Heart right ventricle (tissue), 16 donors: ENCODE measurements at regions of chr15 and their contacts with region 1.

Region 1: DNA sequence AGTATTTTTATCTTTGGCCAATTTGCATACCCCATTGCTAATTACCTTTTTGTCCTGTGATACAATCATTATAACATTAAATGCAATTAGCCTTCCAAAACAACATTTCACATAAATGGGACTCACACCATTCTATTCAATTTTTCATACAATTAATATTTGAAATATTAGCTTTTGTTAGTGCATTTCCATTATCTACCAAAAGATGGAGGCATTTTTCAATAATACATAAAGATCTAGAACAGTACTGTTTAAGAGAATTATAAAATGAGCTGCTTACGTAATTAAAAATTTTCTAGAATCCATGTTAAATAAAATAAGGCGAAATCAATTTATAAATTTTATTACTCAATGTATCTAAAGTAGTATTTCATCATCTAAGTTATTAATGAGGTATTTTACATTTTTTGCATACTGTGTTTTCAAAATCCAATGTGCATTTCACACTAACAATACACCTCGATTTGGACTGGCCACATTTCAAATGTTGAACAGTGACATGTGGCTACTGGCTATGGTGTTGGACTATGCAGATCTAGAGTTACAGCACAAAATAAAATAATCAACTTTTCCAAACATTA is 74.3 kb downstream of the TJP1 start:
- DNase-seq: no peak
- ATAC-seq: no peak
- H3K4me3 ChIP-seq: no peak overlapping the region
- H3K27ac ChIP-seq: no peak overlapping the region
- H3K4me1 ChIP-seq: peaks cover 0 to 33% (median 12%) of the 10 kb centered on the region in 9 donors
- H3K27me3 ChIP-seq: no peaks in the 10 kb centered on the region
- CTCF ChIP-seq: peak; percentile 19 to 72 (median 49)

Region 2: DNA sequence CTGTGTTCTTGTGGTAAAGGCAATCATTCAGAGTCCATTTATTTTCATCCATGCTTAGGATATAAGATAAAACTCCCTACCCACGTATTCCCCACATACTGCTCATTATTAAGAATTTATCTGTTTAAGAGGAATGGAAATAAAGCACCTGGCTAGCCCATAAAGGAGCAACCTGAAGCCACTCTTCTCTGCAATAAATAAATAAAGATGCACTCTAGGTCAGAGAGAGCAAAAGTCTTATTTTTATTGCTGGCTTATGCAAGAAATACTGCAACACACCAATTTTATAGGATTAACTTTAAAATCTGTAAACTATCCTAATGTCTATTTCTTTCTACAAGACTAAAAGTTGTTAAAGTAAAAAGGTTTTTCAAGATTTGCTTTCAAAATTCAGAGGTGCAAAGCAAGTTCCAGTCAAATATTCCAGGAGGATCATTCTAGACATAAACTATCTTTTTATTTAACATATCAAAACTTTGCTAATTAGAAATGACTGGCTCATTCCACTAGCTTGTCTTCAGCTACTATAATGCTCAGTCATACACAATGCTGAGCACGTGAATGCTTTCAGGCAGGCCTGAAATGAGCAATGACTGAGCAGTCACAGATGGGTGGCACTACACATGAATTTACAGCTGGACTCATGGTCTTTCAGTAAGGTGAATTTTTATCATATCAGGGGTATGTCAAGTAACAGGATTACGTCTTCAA is 67.2 kb after region 1 on chr15:
- intact Hi-C with region 1: loop called in 2 of 10 experiments (anchors 5 kb)
- DNase-seq: no peak
- ATAC-seq: peak in 7 of 8 donors; percentile 56 to 87 (median 75)
- H3K4me3 ChIP-seq: no peak overlapping the region
- H3K27ac ChIP-seq: peak overlapping the region in 2 of 10 donors; percentile 9 to 49
- H3K4me1 ChIP-seq: peaks cover 16 to 95% (median 70%) of the 10 kb centered on the region in 9 donors
- H3K27me3 ChIP-seq: peaks cover 0 to 38% (median 0%) of the 10 kb centered on the region in 7 donors
- CTCF ChIP-seq: no peak

Region 3: DNA sequence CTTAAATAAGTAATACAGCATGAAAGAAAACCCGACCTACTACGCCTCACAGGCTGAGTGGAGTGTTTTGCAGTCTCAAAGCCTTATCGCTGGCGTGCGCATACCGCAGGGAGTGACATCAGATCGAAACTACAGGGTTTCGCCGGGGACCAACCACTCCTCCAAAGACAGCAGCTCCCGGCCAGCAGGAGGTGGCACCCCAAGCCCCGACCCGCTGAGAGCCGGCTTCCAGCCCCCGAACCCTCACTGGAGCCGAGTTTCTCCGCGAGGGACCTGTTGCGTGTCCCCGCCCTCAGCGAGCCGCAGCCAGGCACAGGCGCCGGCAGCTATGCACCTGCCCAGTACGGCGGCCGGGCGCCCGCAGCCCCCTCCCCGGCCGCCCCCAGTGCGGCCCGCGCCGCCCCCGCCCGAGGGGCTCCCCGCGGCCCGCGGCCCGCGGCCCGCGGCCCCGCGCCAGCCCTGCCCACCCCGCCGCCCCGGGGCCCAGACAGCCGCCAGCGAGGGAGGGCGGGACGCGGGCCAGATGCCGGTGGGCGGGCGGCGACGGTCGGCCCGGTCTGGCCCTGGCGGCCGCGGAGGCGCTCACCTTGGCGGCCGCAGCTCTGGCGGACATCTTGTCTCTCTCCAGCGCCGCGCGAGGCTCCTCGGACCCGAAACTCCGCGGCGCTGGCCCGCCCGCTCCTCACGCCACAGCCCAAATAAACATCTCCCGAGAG is 73.6 kb after region 1 on chr15:
- intact Hi-C with region 1: loop called in 2 of 10 experiments (anchors 5 kb)
- DNase-seq: peak; percentile 69 to 83
- ATAC-seq: peak; percentile 39 to 86 (median 72)
- H3K4me3 ChIP-seq: peak overlapping the region; percentile 56 to 91 (median 76)
- H3K27ac ChIP-seq: peak overlapping the region; percentile 92 to 99 (median 98)
- H3K4me1 ChIP-seq: peaks cover 4 to 63% (median 28%) of the 10 kb centered on the region in 9 donors
- H3K27me3 ChIP-seq: peaks cover 0 to 73% (median 0%) of the 10 kb centered on the region in 7 donors
- CTCF ChIP-seq: peak in 8 of 9 donors; percentile 9 to 54 (median 28)

Region 4: GRCh38 chr15:29870495-29871151 is 122.7 kb after region 1 on chr15:
- intact Hi-C with region 1: loop called in 1 of 10 experiments (anchors 5 kb)
- DNase-seq: peak; percentile 44 to 61
- ATAC-seq: peak; percentile 64 to 86 (median 80)
- H3K4me3 ChIP-seq: peak overlapping the region in 3 of 10 donors; percentile 23 to 32 (median 26)
- H3K27ac ChIP-seq: peak overlapping the region; percentile 55 to 91 (median 76)
- H3K4me1 ChIP-seq: peaks cover 6 to 67% (median 30%) of the 10 kb centered on the region in 9 donors
- H3K27me3 ChIP-seq: no peaks in the 10 kb centered on the region
- CTCF ChIP-seq: no peak

Region 5: GRCh38 chr15:29913528-29914135 is 165.7 kb after region 1 on chr15:
- intact Hi-C with region 1: loop called in 2 of 10 experiments (anchors 5 kb)
- DNase-seq: no peak
- ATAC-seq: peak; percentile 36 to 76 (median 68)
- H3K4me3 ChIP-seq: no peak overlapping the region
- H3K27ac ChIP-seq: peak overlapping the region; percentile 4 to 86 (median 68)
- H3K4me1 ChIP-seq: peaks cover 5 to 62% (median 34%) of the 10 kb centered on the region in 9 donors
- H3K27me3 ChIP-seq: no peaks in the 10 kb centered on the region
- CTCF ChIP-seq: no peak

Region 6: DNA sequence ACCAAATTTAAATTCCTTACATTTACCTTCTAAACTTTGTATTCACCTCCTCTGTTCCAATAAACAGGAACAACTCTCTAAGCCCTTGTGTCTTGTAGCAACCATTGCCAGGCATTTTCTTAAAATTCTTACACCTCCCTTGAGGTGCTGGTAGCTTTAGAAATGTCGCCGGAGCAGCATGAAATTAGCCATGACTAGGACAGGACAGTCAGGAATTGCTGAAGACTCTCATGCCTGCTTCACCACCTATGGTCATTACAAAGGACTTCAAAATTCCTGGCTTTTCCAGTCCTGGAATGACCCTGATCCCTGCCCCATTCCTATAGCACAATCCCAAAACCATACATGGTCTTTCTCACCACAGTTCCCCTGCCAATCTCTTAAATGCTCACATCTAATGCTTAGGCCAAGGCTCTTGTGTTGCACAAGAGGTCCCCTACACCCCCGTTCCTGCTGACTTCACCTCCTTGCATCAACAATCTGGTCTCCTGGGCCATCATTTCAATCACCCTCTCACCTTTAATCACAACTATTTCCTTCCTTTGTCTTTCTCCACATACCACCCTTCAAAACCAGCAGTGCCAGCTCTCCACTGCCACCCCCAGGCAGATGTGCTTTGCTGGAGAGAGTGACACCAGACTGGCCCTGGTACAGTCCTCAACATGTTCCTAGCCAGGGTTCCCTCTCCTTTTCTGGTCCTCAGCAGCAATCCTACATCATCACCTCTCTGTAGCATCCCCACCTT is 187.5 kb after region 1 on chr15:
- intact Hi-C with region 1: loop called in 1 of 10 experiments (anchors 10 kb)
- DNase-seq: no peak
- ATAC-seq: peak in 6 of 8 donors; percentile 53 to 80 (median 61)
- H3K4me3 ChIP-seq: no peak overlapping the region
- H3K27ac ChIP-seq: no peak overlapping the region
- H3K4me1 ChIP-seq: peaks cover 0 to 3% (median 0%) of the 10 kb centered on the region in 9 donors
- H3K27me3 ChIP-seq: no peaks in the 10 kb centered on the region
- CTCF ChIP-seq: peak in 6 of 9 donors; percentile 19 to 56 (median 40)